Activated CD4-positive, alpha-beta T cell treated with anti-CD3 and anti-CD28 coated beads, Interleukin-2, amount 10 ng/mL, durations not matched to agents 7 days and 5 days (primary cell): ENCODE measurements at regions of chr15 and their contacts with region 1.

Region 1: DNA sequence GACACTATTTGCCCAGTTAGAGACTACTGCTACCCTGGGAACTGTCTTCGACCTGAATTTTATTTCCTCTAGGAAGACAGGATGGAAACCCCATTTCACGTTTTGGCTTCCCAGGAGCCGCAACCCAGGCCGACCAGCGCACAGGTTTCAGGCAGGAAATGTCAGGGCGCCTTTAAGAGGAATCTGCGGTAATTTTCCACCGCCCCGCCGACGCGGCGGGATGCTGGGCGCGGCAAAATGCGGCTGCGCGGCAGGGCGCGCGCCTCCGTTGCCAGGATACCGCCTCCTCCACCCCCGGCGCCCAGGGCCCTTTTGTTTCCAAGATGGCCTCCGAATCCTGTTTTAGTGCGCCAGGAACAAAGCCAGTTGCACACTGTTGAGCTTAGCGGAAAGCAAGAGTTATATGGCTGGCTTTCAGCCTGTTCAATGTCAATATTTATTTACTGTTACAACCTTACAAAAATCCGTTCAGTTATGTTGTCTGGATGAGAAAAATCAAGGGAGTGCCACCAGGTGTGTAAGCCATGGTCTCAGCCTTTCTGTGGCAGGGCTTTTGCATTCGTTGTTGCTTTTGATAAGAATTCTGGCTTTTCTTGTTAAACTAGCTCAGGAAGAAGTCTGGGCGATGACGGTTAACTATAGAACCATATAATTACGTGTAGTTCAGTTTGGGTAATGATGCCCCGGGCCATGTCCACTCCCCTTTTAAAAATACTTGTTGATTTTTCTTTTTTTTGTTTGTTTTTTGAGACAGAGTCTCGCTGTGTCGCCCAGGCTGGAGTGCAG is 79.7 kb upstream of the CHD2 start:
- DNase-seq: peak; percentile 89
- H3K4me3 Mint-ChIP-seq: peak overlapping the region; percentile 80
- H3K27ac Mint-ChIP-seq: peak overlapping the region; percentile 85
- H3K4me1 Mint-ChIP-seq: peaks cover 67% of the 10 kb centered on the region
- H3K27me3 Mint-ChIP-seq: no peaks in the 10 kb centered on the region

Region 2: GRCh38 chr15:92831655-92832328 is 11.4 kb after region 1 on chr15:
- CTCF ChIA-PET with region 1: interaction called, 47 read pairs
- POLR2A ChIA-PET with region 1: interaction called, 5 read pairs
- DNase-seq: peak; percentile 93
- H3K4me3 Mint-ChIP-seq: peak overlapping the region; percentile 75
- H3K27ac Mint-ChIP-seq: peak overlapping the region; percentile 95
- H3K4me1 Mint-ChIP-seq: peaks cover 51% of the 10 kb centered on the region
- H3K27me3 Mint-ChIP-seq: no peaks in the 10 kb centered on the region